ENCODE measurements at regions of chr18 and their contacts with region 1.

Region 1: DNA sequence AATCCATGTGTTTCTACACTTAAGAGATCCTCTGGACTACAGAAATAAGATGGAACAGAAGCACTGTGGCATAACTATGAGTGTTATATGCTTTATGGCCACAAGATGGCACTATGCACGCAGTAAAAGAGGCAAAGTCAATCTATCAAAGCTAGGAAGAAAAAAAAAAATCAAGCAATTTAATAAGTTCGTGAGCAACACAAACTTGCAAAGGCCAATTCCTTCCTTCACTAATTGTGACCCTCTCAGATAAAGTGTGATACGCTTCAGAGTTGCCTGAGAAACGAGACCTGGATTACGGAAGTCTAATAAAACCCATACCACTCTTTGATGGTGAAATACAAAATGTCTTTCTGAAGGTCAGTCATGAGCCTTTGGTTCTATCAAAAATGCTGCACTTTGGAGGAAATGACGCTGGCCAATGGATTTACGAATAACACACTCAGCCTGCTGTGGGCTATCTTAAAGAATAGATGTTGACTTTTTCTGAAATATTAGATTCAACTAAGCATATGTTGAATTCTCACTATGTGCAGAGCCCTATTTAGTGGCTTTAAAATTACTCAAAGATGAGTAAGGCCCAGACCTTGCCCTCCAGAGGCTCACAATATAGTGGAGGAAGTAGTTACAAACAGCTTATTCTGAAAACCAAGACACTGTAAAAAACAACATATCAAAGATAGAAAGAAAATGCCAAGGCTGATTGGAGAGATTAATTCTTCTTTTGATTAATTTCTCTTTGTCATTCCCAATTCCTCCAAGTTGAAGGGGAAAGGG is 35.5 kb upstream of the TTR start:
- DNase-seq: peak; percentile 34 to 74 (median 56)
- H3K4me3 ChIP-seq: no peak overlapping the region
- H3K27ac ChIP-seq: peak overlapping the region in 3 of 5 donors; percentile 21 to 41 (median 38)
- H3K4me1 ChIP-seq: peaks cover 0 to 3% of the 10 kb centered on the region in 2 donors
- H3K27me3 ChIP-seq: no peaks in the 10 kb centered on the region
- CTCF ChIP-seq: peak; percentile 86 to 98 (median 88)
- POLR2A ChIP-seq: no peak

Region 2: GRCh38 chr18:31722369-31722957 is 166.3 kb after region 1 on chr18:
- intact Hi-C with region 1: loop called (anchors 5 to 10 kb)
- DNase-seq: peak; percentile 85 to 98 (median 92)
- H3K4me3 ChIP-seq: no peak overlapping the region
- H3K27ac ChIP-seq: no peak overlapping the region
- H3K4me1 ChIP-seq: peaks cover 0 to 25% of the 10 kb centered on the region in 2 donors
- H3K27me3 ChIP-seq: no peaks in the 10 kb centered on the region
- CTCF ChIP-seq: peak; percentile 75 to 94 (median 85)
- POLR2A ChIP-seq: no peak

Region 3: GRCh38 chr18:31819925-31820229 is 263.7 kb after region 1 on chr18:
- intact Hi-C with region 1: loop called (anchors 5 to 10 kb)
- DNase-seq: no peak
- H3K4me3 ChIP-seq: no peak overlapping the region
- H3K27ac ChIP-seq: no peak overlapping the region
- H3K4me1 ChIP-seq: no peaks in the 10 kb centered on the region
- H3K27me3 ChIP-seq: no peaks in the 10 kb centered on the region
- CTCF ChIP-seq: no peak
- POLR2A ChIP-seq: no peak